ENCODE measurements at regions of chrX and their contacts with region 1.

Region 1: GRCh38 chrX:41441934-41442823 is 5.0 kb upstream of the NYX start:
- DNase-seq: peak; percentile 76 to 94
- ATAC-seq: peak; percentile 94
- H3K4me3 ChIP-seq: peak overlapping the region; percentile 36
- H3K27ac ChIP-seq: peak overlapping the region; percentile 90 to 97
- H3K4me1 ChIP-seq: peaks cover 17% of the 10 kb centered on the region
- CTCF ChIP-seq: peak; percentile 71
- EP300 ChIP-seq: peak in 1 of 2 experiments; percentile 38; a peak in 1 of 5 replicates
- POLR2A ChIP-seq: peak; percentile 63
- RAD21 ChIP-seq: peak; percentile 53 to 90

Region 2: DNA sequence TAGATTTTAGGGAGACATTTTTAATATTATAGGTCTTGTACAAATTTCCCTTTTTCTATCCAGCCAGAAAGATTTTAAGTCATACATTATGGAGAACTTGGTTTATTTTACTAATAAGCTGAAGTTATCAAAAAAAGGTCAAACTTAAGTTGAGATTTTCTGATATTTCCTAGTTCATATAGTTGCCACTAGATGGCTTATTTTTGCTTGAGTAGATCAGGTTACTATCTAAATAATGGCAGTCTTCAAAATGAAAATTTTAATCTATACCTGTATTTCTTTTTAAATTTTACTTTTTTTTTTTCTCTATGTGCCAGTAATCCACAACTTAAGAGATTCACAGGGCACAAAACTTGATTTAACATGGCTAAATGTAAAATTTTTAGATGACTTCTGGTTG is 304.6 kb before region 1 on chrX:
- CTCF ChIA-PET with region 1: no interaction called
- POLR2A ChIA-PET with region 1: no interaction called
- DNase-seq: no peak
- ATAC-seq: no peak
- H3K4me3 ChIP-seq: no peak overlapping the region
- H3K27ac ChIP-seq: no peak overlapping the region
- H3K4me1 ChIP-seq: peaks cover 10% of the 10 kb centered on the region; the same call in 2 of the 3 replicates
- CTCF ChIP-seq: peak; percentile 38; the same call in 2 of the 3 replicates
- EP300 ChIP-seq: no peak
- POLR2A ChIP-seq: no peak
- RAD21 ChIP-seq: 0 out of 5 replicates have a peak, but pooled peaks have one; percentile 5 to 27

Region 3: GRCh38 chrX:41452966-41453365 is 10.8 kb after region 1 on chrX:
- CTCF ChIA-PET with region 1: interaction called, 14 read pairs
- POLR2A ChIA-PET with region 1: no interaction called
- DNase-seq: no peak
- ATAC-seq: no peak
- H3K4me3 ChIP-seq: no peak overlapping the region
- H3K27ac ChIP-seq: no peak overlapping the region; a peak in 1 of 6 replicates
- H3K4me1 ChIP-seq: peaks cover 14% of the 10 kb centered on the region
- CTCF ChIP-seq: no peak
- EP300 ChIP-seq: no peak
- POLR2A ChIP-seq: no peak
- RAD21 ChIP-seq: no peak

Region 4: GRCh38 chrX:41827886-41828285 is 385.7 kb after region 1 on chrX:
- CTCF ChIA-PET with region 1: no interaction called
- POLR2A ChIA-PET with region 1: no interaction called
- DNase-seq: no peak
- ATAC-seq: no peak
- H3K4me3 ChIP-seq: no peak overlapping the region
- H3K27ac ChIP-seq: no peak overlapping the region
- H3K4me1 ChIP-seq: peaks cover 16% of the 10 kb centered on the region
- CTCF ChIP-seq: no peak
- EP300 ChIP-seq: no peak
- POLR2A ChIP-seq: no peak
- RAD21 ChIP-seq: no peak

Measured in A549 (cell line).